ENCODE measurements at regions of chr22 and their contacts with region 1.

Region 1: GRCh38 chr22:17570851-17571641 is 7.7 kb downstream of the SLC25A18 start:
- DNase-seq: peak; percentile 98
- H3K4me3 ChIP-seq: peak overlapping the region; percentile 17 to 41 (median 37)
- H3K27ac ChIP-seq: peak overlapping the region; percentile 77 to 96 (median 91)
- H3K4me1 ChIP-seq: peaks cover 0 to 31% (median 27%) of the 10 kb centered on the region in 4 donors
- H3K27me3 ChIP-seq: no peaks in the 10 kb centered on the region
- CTCF ChIP-seq: no peak
- EP300 ChIP-seq: peak; percentile 99 to 100 (median 100)
- POLR2A ChIP-seq: peak in 1 of 2 donors; percentile 36

Region 2: DNA sequence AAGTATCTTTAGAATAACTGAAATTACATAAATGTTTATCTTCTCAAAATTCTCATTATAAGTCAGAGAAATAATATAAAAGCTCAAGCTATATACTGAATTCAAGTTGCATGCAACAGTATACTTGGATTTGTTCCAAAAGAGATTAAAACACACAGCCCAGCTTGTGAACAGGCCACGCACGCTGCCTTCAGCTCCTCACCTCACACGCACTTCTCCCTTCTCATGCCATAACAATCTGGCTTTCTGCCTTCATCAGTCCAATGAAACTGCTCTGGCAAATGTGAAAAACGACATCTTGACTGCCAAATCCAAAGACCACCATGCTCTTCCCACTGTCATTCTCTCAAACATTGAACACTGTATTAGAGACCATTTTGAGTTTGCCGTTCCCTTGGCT is 35.5 kb after region 1 on chr22:
- intact Hi-C with region 1: loop called (anchors 5 kb)
- DNase-seq: peak; percentile 77
- H3K4me3 ChIP-seq: no peak overlapping the region
- H3K27ac ChIP-seq: peak overlapping the region; percentile 53 to 79 (median 68)
- H3K4me1 ChIP-seq: peaks cover 0 to 24% (median 15%) of the 10 kb centered on the region in 4 donors
- H3K27me3 ChIP-seq: no peaks in the 10 kb centered on the region
- CTCF ChIP-seq: no peak
- EP300 ChIP-seq: peak in 3 of 4 donors; percentile 40 to 93 (median 41)
- POLR2A ChIP-seq: no peak

Region 3: DNA sequence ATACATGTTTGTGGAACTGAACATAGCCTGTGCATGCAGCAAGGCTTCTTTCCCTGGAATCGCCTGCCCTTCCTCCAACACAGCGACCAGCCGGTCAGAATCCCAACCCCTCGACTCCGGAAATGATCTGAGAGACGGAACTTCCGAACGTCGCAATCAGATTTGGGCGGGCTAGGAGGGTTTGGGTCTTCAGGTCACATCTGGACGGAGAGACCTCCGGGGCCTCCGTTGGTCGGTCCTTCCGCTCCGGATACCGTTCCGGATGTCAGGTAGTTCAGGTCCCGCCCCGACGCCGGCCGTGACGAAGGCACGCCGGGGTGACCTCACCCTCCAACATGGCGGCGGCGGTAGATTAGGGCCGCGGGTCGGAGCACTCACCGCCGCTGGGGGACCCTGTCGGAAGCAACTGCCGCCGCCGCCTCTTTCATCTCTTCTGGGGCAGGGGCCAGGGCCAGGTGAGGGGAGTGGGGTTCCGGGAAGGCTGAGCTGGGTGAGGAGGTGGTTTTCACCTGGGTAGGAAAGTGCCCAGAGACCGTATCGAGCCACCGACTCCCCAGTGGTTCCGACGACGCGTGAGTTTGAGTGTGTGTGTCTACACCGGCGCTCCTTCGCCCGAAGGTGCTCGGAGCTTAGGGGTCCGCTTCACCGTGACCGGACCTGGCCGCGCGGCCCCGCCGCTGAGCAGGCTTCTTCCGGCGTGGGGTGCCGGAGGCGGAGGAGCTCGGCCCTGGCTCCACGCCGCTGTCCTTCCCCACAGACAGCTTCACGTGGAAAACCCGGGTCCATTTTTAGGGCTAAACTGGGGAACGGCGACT is 67.6 kb after region 1 on chr22 and contains the start of gene BCL2L13:
- intact Hi-C with region 1: loop called (anchors 5 kb)
- DNase-seq: peak; percentile 96
- H3K4me3 ChIP-seq: peak within 1 kb of the TSS; percentile 63 to 97 (median 79)
- H3K27ac ChIP-seq: peak within 1 kb of the TSS; percentile 93 to 99 (median 99)
- H3K4me1 ChIP-seq: peaks cover 0 to 27% (median 18%) of the 10 kb centered on the region in 4 donors
- H3K27me3 ChIP-seq: no peaks in the 10 kb centered on the region
- CTCF ChIP-seq: no peak
- EP300 ChIP-seq: peak in 1 of 4 donors; percentile 25
- POLR2A ChIP-seq: peak; percentile 96 to 97
- total RNA-seq, gene BCL2L13: 59.2 to 68.1 (median 66.8) TPM

Region 4: GRCh38 chr22:17706018-17706900 is 135.2 kb after region 1 on chr22:
- intact Hi-C with region 1: loop called (anchors 5 kb)
- DNase-seq: peak; percentile 75
- H3K4me3 ChIP-seq: peak overlapping the region; percentile 24 to 47 (median 34)
- H3K27ac ChIP-seq: peak overlapping the region; percentile 76 to 84 (median 80)
- H3K4me1 ChIP-seq: peaks cover 0 to 27% (median 23%) of the 10 kb centered on the region in 4 donors
- H3K27me3 ChIP-seq: no peaks in the 10 kb centered on the region
- CTCF ChIP-seq: no peak
- EP300 ChIP-seq: peak in 1 of 4 donors; percentile 23
- POLR2A ChIP-seq: peak in 1 of 2 donors; percentile 47

Region 5: DNA sequence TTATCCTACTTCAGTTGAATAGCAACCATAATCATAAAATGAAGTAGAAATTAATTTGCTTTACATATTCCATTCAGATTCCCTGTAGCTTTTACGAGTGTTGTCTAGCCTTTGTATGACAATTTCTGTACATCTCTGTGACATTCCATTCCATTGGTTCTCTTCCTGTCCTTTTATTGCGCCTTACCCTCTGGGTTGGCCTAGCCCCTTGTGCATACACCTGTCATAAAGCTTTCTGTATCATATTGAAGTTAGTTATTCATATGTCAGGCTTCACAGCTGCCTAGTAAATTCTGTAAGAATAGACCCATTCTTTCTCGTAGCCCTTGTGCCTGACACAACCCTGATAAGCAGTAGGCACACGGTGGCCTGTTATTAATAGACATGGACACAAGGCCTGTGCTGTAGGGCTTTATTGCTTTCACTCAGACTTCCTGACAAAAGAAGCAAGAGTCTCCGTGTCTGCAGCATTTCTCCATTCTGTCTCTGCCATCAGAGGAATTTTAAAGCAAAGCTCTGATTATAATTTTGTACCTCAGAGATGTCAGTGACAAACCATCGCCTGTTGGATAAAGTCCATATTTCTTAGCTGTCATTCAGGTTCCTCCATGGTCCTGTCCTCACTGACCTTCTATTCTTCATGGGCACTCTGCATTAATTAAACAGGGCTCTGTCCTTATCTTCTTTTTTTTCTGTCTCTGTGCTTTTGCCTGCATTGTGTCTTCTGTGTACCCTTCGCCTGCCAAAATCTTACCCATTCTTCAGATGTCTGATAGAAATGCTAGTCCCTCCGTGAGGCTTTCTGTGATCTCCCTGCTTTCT is 153.8 kb after region 1 on chr22:
- intact Hi-C with region 1: loop called (anchors 5 kb)
- DNase-seq: no peak
- H3K4me3 ChIP-seq: no peak overlapping the region
- H3K27ac ChIP-seq: peak overlapping the region; percentile 43 to 82 (median 74)
- H3K4me1 ChIP-seq: peaks cover 0 to 40% (median 35%) of the 10 kb centered on the region in 4 donors
- H3K27me3 ChIP-seq: no peaks in the 10 kb centered on the region
- CTCF ChIP-seq: no peak
- EP300 ChIP-seq: no peak
- POLR2A ChIP-seq: no peak

Measured in sigmoid colon (tissue), 7 donors.